Activated T-helper 2 cell treated with anti-CD3 and anti-CD28 coated beads, Interferon-gamma antibody, Interleukin-2, Interleukin-4, amounts not matched to agents 10 μg/mL and 5 μg/mL and 100 μg/mL, durations not matched to agents 14 hours and 24 hours and 36 hours (primary cell): ENCODE measurements at regions of chr3 and their contacts with region 1.

Region 1: GRCh38 chr3:18740631-18741583 is 315.8 kb upstream of the SATB1 start:
- DNase-seq: peak; percentile 61
- H3K4me3 Mint-ChIP-seq: peak overlapping the region; percentile 53
- H3K27ac Mint-ChIP-seq: peak overlapping the region; percentile 90
- H3K4me1 Mint-ChIP-seq: peaks cover 85% of the 10 kb centered on the region
- H3K27me3 Mint-ChIP-seq: no peaks in the 10 kb centered on the region

Region 2: GRCh38 chr3:18424729-18425640 is 315.9 kb before region 1 on chr3 and contains the start of gene SATB1:
- intact Hi-C with region 1: loop called (anchors 5 kb)
- DNase-seq: peak; percentile 63
- H3K4me3 Mint-ChIP-seq: peak within 1 kb of the TSS; percentile 89
- H3K27ac Mint-ChIP-seq: peak within 1 kb of the TSS; percentile 93
- H3K4me1 Mint-ChIP-seq: peaks cover 62% of the 10 kb centered on the region
- H3K27me3 Mint-ChIP-seq: no peaks in the 10 kb centered on the region
- total RNA-seq, gene SATB1: 831 and 866 TPM in 2 replicates

Region 3: GRCh38 chr3:18649666-18650363 is 91.1 kb before region 1 on chr3:
- intact Hi-C with region 1: loop called (anchors 1 kb)
- DNase-seq: peak; percentile 49
- H3K4me3 Mint-ChIP-seq: peak overlapping the region; percentile 14
- H3K27ac Mint-ChIP-seq: peak overlapping the region; percentile 93
- H3K4me1 Mint-ChIP-seq: peaks cover 84% of the 10 kb centered on the region
- H3K27me3 Mint-ChIP-seq: no peaks in the 10 kb centered on the region

Region 4: GRCh38 chr3:18725668-18726407 is 15.1 kb before region 1 on chr3:
- intact Hi-C with region 1: loop called (anchors 1 kb)
- DNase-seq: no peak
- H3K4me3 Mint-ChIP-seq: peak overlapping the region; percentile 81
- H3K27ac Mint-ChIP-seq: peak overlapping the region; percentile 96
- H3K4me1 Mint-ChIP-seq: peaks cover 63% of the 10 kb centered on the region
- H3K27me3 Mint-ChIP-seq: no peaks in the 10 kb centered on the region

Region 5: GRCh38 chr3:18778598-18778997 is 37.7 kb after region 1 on chr3:
- intact Hi-C with region 1: loop called (anchors 2 kb)
- DNase-seq: no peak
- H3K4me3 Mint-ChIP-seq: peak overlapping the region; percentile 60
- H3K27ac Mint-ChIP-seq: peak overlapping the region; percentile 89
- H3K4me1 Mint-ChIP-seq: peaks cover 35% of the 10 kb centered on the region
- H3K27me3 Mint-ChIP-seq: no peaks in the 10 kb centered on the region

Region 6: DNA sequence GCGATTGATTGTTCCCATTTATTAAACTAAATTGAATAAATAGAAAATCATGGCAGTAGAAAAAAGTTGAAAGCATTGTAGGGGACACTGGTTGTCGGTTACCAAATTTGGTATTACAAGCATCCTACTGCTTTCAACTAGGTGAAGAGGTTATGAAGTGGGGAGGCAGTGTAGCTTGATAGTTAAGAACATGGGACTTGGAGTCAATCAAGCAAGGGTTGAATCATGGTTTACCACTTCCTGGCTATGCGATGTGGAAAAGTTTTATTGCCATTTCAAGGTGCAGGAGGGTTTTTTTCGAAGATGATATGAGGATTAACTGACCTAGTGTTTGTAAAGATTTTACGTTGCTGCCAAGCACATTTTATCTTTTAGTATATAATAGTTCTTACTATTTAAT is 89.2 kb after region 1 on chr3:
- intact Hi-C with region 1: no loop called
- DNase-seq: no peak
- H3K4me3 Mint-ChIP-seq: no peak overlapping the region
- H3K27ac Mint-ChIP-seq: peak overlapping the region; percentile 35
- H3K4me1 Mint-ChIP-seq: peaks cover 22% of the 10 kb centered on the region
- H3K27me3 Mint-ChIP-seq: no peaks in the 10 kb centered on the region

Region 7: GRCh38 chr3:19931180-19931692 is 1190.3 kb after region 1 on chr3:
- intact Hi-C with region 1: loop called (anchors 10 kb)
- DNase-seq: no peak
- H3K4me3 Mint-ChIP-seq: peak overlapping the region; percentile 35
- H3K27ac Mint-ChIP-seq: peak overlapping the region; percentile 88
- H3K4me1 Mint-ChIP-seq: peaks cover 36% of the 10 kb centered on the region
- H3K27me3 Mint-ChIP-seq: peaks cover 17% of the 10 kb centered on the region